ENCODE measurements at regions of chr6 and their contacts with region 1.

Region 1: GRCh38 chr6:105389543-105389942 is 13.3 kb downstream of the PREP start:
- DNase-seq: no peak
- H3K4me3 Mint-ChIP-seq: no peak overlapping the region
- H3K27ac Mint-ChIP-seq: peak overlapping the region; percentile 52
- H3K4me1 Mint-ChIP-seq: peaks cover 64% of the 10 kb centered on the region
- H3K27me3 Mint-ChIP-seq: no peaks in the 10 kb centered on the region
- CTCF ChIP-seq: no peak

Region 2: DNA sequence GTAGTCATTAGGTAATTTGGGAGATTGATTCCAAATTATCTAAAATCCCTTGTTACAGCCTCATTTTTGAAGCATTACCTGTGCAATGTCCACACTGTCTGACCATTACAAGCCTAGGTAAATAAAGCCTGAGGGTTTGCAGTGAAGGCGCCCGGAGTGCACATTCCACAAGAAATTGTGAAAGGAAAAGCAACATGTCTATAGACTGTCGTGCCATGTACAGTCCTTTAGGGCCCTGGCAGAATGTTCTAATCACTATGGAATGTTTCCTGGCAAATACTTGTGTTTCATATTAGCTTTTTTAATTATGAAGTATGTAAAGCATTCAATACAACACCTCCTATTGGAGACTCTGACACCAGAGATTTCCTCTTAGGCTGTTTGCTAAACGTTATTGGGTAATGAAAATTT is 15.5 kb before region 1 on chr6:
- CTCF ChIA-PET with region 1: interaction called, 13 read pairs
- intact Hi-C with region 1: loop called (anchors 2 kb)
- DNase-seq: peak; percentile 62
- H3K4me3 Mint-ChIP-seq: no peak overlapping the region
- H3K27ac Mint-ChIP-seq: peak overlapping the region; percentile 92
- H3K4me1 Mint-ChIP-seq: peaks cover 55% of the 10 kb centered on the region
- H3K27me3 Mint-ChIP-seq: no peaks in the 10 kb centered on the region
- CTCF ChIP-seq: no peak